ENCODE measurements at regions of chrX and their contacts with region 1.

Region 1: GRCh38 chrX:123960042-123960611 is 1.4 kb upstream of the STAG2 start:
- DNase-seq: peak; percentile 80 to 94 (median 88)
- ATAC-seq: peak; percentile 77 to 84 (median 80)
- H3K4me3 ChIP-seq: peak overlapping the region; percentile 82 to 96
- H3K4me3 Mint-ChIP-seq: peak overlapping the region; percentile 95 to 99 (median 96)
- H3K27ac ChIP-seq: peak overlapping the region; percentile 100
- H3K27ac Mint-ChIP-seq: peak overlapping the region; percentile 96 to 98
- H3K4me1 ChIP-seq: peaks cover 4 to 9% of the 10 kb centered on the region in 2 experiments
- H3K4me1 Mint-ChIP-seq: peaks cover 21 to 39% (median 24%) of the 10 kb centered on the region in 3 donors
- H3K27me3 ChIP-seq: no peaks in the 10 kb centered on the region
- H3K27me3 Mint-ChIP-seq: peaks cover 0 to 5% of the 10 kb centered on the region in 2 donors

Region 2: DNA sequence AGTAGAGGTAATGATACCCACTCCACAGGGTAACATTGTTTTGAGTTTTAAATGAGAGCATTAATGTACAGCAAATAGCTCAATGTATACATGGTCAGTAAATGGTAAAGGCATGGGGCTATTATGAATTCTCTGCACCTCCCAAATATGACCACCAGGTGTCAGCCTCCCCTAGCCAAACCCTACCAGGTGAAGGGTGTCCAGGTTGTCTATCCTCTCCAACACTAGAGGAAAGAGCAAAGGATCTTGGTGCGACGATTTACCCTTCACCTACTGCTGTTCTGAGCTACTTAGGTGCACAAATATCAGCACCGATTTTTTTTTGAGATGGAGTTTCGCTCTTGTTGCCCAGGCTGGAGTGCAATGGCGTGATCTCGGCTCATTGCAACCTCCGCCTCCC is 126.7 kb before region 1 on chrX:
- CTCF ChIA-PET with region 1: interaction called, 3 to 11 read pairs
- POLR2A ChIA-PET with region 1: interaction called in 1 of 2 experiments, 3 read pairs
- DNase-seq: peak; percentile 2 to 73 (median 40)
- ATAC-seq: peak; percentile 85 to 92 (median 88)
- H3K4me3 ChIP-seq: no peak overlapping the region
- H3K4me3 Mint-ChIP-seq: no peak overlapping the region
- H3K27ac ChIP-seq: no peak overlapping the region
- H3K27ac Mint-ChIP-seq: no peak overlapping the region
- H3K4me1 ChIP-seq: no peaks in the 10 kb centered on the region
- H3K4me1 Mint-ChIP-seq: peaks cover 0 to 4% (median 0%) of the 10 kb centered on the region in 3 donors
- H3K27me3 ChIP-seq: no peaks in the 10 kb centered on the region
- H3K27me3 Mint-ChIP-seq: peaks cover 0 to 8% of the 10 kb centered on the region in 2 donors

Region 3: GRCh38 chrX:123976706-123977316 is 16.7 kb after region 1 on chrX:
- CTCF ChIA-PET with region 1: interaction called, 4 to 10 read pairs
- POLR2A ChIA-PET with region 1: interaction called, 4 to 7 read pairs
- DNase-seq: peak in 1 of 35 experiments; percentile 42
- ATAC-seq: peak in 1 of 4 experiments; percentile 62
- H3K4me3 ChIP-seq: no peak overlapping the region
- H3K4me3 Mint-ChIP-seq: peak overlapping the region in 2 of 3 donors; percentile 7 to 14
- H3K27ac ChIP-seq: no peak overlapping the region
- H3K27ac Mint-ChIP-seq: peak overlapping the region in 1 of 2 donors; percentile 64
- H3K4me1 ChIP-seq: peaks cover 7 to 12% of the 10 kb centered on the region in 2 experiments
- H3K4me1 Mint-ChIP-seq: peaks cover 39 to 60% (median 53%) of the 10 kb centered on the region in 3 donors
- H3K27me3 ChIP-seq: no peaks in the 10 kb centered on the region
- H3K27me3 Mint-ChIP-seq: no peaks in the 10 kb centered on the region

Region 4: DNA sequence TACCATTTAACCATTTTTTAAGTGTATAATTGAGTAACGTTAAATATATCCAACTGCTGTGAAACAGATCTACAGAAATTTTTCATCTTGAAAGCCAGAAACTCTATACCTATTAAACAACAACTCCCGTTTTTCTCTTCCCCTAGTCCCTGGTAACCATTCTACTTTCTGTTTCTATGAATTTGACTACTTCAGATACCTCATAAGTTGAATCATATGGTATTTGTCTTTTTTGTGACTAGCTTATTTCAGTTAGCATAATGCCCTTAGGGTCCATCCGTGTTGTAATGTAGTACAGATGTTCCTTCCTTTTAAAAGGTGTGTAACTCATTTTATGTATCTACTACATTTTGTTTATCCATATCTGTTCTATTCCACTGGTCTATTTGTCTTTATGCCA is 50.0 kb after region 1 on chrX:
- CTCF ChIA-PET with region 1: no interaction called
- POLR2A ChIA-PET with region 1: interaction called in 1 of 2 experiments, 12 read pairs
- DNase-seq: no peak
- ATAC-seq: peak in 1 of 4 experiments; percentile 33
- H3K4me3 ChIP-seq: no peak overlapping the region
- H3K4me3 Mint-ChIP-seq: peak overlapping the region in 1 of 3 donors; percentile 68
- H3K27ac ChIP-seq: no peak overlapping the region
- H3K27ac Mint-ChIP-seq: peak overlapping the region in 1 of 2 donors; percentile 28
- H3K4me1 ChIP-seq: peaks cover 2 to 7% of the 10 kb centered on the region in 2 experiments
- H3K4me1 Mint-ChIP-seq: peaks cover 50 to 82% (median 80%) of the 10 kb centered on the region in 3 donors
- H3K27me3 ChIP-seq: no peaks in the 10 kb centered on the region
- H3K27me3 Mint-ChIP-seq: no peaks in the 10 kb centered on the region